ENCODE measurements at regions of chr14 and their contacts with region 1.

Region 1: GRCh38 chr14:54175298-54175942 is 218.8 kb upstream of the BMP4 start:
- DNase-seq: peak; percentile 66 to 89 (median 76)
- H3K4me3 ChIP-seq: no peak overlapping the region
- H3K27ac ChIP-seq: no peak overlapping the region
- H3K4me1 ChIP-seq: peaks cover 3 to 6% of the 10 kb centered on the region in 2 donors
- H3K27me3 ChIP-seq: no peaks in the 10 kb centered on the region
- CTCF ChIP-seq: peak; percentile 85 to 94 (median 90)
- POLR2A ChIP-seq: no peak

Region 2: DNA sequence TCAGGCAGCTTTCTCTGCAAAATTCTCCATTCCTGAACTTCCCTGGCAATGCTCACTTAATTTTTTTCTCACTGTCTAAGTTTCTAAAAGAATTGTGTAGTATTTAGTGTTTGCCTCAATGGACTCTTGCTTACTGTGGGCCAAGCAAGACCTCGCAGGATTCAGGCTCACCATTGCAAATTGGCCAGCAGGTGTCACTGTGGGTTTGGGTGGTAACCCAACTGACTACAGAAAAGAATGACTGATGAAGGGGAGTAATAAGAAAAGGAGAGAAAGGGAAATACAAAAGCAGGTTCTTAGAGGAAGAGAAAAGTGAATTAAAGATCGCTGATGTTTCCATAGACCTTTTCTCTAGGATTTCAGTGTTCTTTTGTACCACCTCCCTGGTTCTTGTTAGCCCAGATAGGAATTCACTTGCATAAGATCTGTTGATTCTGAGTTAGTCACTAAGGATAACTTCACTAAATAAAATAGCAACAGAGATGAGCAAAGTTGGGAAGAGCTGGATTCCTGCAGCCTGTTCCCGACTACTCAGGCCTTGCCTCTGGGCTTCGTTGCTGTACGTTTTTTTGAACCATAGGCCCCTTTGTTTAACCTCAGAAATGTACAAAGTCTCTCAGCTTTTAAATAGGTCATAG is 635.8 kb before region 1 on chr14:
- intact Hi-C with region 1: loop called (anchors 10 kb)
- DNase-seq: peak; percentile 69 to 91 (median 79)
- H3K4me3 ChIP-seq: no peak overlapping the region
- H3K27ac ChIP-seq: no peak overlapping the region
- H3K4me1 ChIP-seq: peaks cover 0 to 4% of the 10 kb centered on the region in 2 donors
- H3K27me3 ChIP-seq: no peaks in the 10 kb centered on the region
- CTCF ChIP-seq: peak; percentile 72 to 88 (median 82)
- POLR2A ChIP-seq: no peak

Region 3: GRCh38 chr14:53953002-53953827 is 222.2 kb before region 1 on chr14:
- intact Hi-C with region 1: loop called in 1 of 2 experiments (anchors 10 kb)
- DNase-seq: peak; percentile 84 to 93 (median 90)
- H3K4me3 ChIP-seq: peak overlapping the region; percentile 1 to 76 (median 60)
- H3K27ac ChIP-seq: peak overlapping the region in 4 of 5 donors; percentile 53 to 90 (median 84)
- H3K4me1 ChIP-seq: peaks cover 26 to 30% of the 10 kb centered on the region in 2 donors
- H3K27me3 ChIP-seq: peaks cover 4% of the 10 kb centered on the region
- CTCF ChIP-seq: no peak
- POLR2A ChIP-seq: peak; percentile 76 to 90

Region 4: GRCh38 chr14:54085232-54085761 is 90.1 kb before region 1 on chr14:
- intact Hi-C with region 1: loop called in 1 of 2 experiments (anchors 5 kb)
- DNase-seq: no peak
- H3K4me3 ChIP-seq: no peak overlapping the region
- H3K27ac ChIP-seq: no peak overlapping the region
- H3K4me1 ChIP-seq: peaks cover 0 to 4% of the 10 kb centered on the region in 2 donors
- H3K27me3 ChIP-seq: no peaks in the 10 kb centered on the region
- CTCF ChIP-seq: no peak
- POLR2A ChIP-seq: no peak

Region 5: DNA sequence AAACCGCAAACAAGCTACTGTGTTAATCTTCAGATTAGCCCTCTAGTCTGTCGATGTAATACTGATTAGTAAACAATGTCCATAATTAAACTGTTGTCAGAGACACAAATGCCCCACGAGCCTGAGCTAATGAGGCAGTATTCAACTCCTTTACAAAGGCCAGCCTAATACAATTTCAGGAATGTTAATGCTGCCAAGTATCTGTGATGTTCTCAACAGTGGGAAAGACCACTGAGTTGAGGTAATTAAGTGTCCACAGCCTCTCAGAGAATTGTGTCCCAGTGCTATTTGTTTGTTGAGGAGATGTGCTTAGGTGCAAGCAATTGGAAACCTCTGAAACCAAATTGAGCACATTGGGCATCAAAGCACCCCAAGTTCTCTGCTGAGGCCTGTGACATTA is 82.0 kb after region 1 on chr14:
- intact Hi-C with region 1: no loop called
- DNase-seq: no peak
- H3K4me3 ChIP-seq: no peak overlapping the region
- H3K27ac ChIP-seq: no peak overlapping the region
- H3K4me1 ChIP-seq: peaks cover 5% of the 10 kb centered on the region in 2 donors
- H3K27me3 ChIP-seq: no peaks in the 10 kb centered on the region
- CTCF ChIP-seq: no peak
- POLR2A ChIP-seq: no peak

Region 6: GRCh38 chr14:54291491-54292191 is 116.2 kb after region 1 on chr14:
- intact Hi-C with region 1: no loop called
- DNase-seq: no peak
- H3K4me3 ChIP-seq: no peak overlapping the region
- H3K27ac ChIP-seq: no peak overlapping the region
- H3K4me1 ChIP-seq: no peaks in the 10 kb centered on the region
- H3K27me3 ChIP-seq: no peaks in the 10 kb centered on the region
- CTCF ChIP-seq: no peak
- POLR2A ChIP-seq: no peak

Region 7: GRCh38 chr14:54329082-54329695 is 153.8 kb after region 1 on chr14:
- intact Hi-C with region 1: loop called in 1 of 2 experiments (anchors 5 kb)
- DNase-seq: peak; percentile 29 to 72 (median 54)
- H3K4me3 ChIP-seq: no peak overlapping the region
- H3K27ac ChIP-seq: no peak overlapping the region
- H3K4me1 ChIP-seq: no peaks in the 10 kb centered on the region
- H3K27me3 ChIP-seq: no peaks in the 10 kb centered on the region
- CTCF ChIP-seq: peak; percentile 59 to 75 (median 68)
- POLR2A ChIP-seq: no peak